A549 (cell line): ENCODE measurements at regions of chr11 and their contacts with region 1.

Region 1: GRCh38 chr11:75406338-75406777 is 7.0 kb downstream of the RPS3 start:
- DNase-seq: no peak
- ATAC-seq: no peak
- H3K4me3 ChIP-seq: no peak overlapping the region
- H3K27ac ChIP-seq: no peak overlapping the region
- H3K4me1 ChIP-seq: peaks cover 49% of the 10 kb centered on the region
- CTCF ChIP-seq: no peak
- EP300 ChIP-seq: no peak
- POLR2A ChIP-seq: no peak
- RAD21 ChIP-seq: no peak

Region 2: DNA sequence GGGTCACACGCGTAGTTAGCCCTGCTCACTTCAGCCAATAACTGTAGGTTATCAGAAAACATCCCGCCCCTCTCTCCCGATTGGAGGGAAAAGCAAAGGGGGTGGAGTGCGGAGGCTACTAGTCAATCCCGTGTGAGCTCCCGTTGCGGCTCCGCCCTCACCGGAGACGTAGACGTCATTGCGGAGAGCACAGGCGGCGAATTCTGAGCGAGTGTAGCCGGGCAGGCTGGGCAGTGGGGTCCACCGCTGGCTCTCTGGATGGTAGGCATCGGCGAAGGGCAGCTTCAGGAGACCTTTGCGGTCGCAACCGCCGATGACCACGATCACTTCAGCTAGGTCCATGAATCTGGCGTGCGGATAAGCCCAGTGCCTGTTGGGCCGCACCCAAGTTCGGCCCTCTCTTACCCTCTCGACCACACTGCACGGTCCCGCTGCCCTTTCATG is 21.9 kb after region 1 on chr11:
- CTCF ChIA-PET with region 1: interaction called, 231 read pairs
- POLR2A ChIA-PET with region 1: no interaction called
- DNase-seq: no peak
- ATAC-seq: no peak
- H3K4me3 ChIP-seq: no peak overlapping the region
- H3K27ac ChIP-seq: no peak overlapping the region
- H3K4me1 ChIP-seq: peaks cover 16% of the 10 kb centered on the region
- CTCF ChIP-seq: no peak
- EP300 ChIP-seq: no peak
- POLR2A ChIP-seq: no peak
- RAD21 ChIP-seq: no peak

Region 3: DNA sequence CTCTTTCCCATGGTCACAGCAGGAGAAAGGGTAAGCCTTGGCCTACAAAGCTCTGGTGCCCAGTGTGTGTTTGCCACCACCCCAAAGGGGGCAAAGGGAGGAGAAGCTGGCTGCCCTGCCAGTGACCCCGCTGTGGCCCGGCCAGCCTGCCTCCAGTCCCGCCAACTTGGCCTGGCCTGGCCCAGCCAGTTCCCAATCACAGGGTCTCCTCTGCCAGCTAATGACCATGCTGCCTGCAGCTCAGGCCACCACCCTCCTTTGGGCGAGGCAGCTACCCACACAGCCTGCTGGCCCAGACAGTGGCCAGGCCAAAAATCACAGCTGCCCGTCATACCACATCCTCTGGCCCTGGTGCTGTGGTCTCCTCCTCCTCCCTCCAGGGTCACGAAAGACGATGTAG is 114.3 kb after region 1 on chr11:
- CTCF ChIA-PET with region 1: interaction called, 14 read pairs
- POLR2A ChIA-PET with region 1: interaction called, 4 read pairs
- DNase-seq: no peak
- ATAC-seq: no peak
- H3K4me3 ChIP-seq: no peak overlapping the region
- H3K27ac ChIP-seq: no peak overlapping the region
- H3K4me1 ChIP-seq: peaks cover 11% of the 10 kb centered on the region
- CTCF ChIP-seq: no peak
- EP300 ChIP-seq: no peak
- POLR2A ChIP-seq: no peak
- RAD21 ChIP-seq: no peak